ENCODE measurements at regions of chr7 and their contacts with region 1.

Region 1: DNA sequence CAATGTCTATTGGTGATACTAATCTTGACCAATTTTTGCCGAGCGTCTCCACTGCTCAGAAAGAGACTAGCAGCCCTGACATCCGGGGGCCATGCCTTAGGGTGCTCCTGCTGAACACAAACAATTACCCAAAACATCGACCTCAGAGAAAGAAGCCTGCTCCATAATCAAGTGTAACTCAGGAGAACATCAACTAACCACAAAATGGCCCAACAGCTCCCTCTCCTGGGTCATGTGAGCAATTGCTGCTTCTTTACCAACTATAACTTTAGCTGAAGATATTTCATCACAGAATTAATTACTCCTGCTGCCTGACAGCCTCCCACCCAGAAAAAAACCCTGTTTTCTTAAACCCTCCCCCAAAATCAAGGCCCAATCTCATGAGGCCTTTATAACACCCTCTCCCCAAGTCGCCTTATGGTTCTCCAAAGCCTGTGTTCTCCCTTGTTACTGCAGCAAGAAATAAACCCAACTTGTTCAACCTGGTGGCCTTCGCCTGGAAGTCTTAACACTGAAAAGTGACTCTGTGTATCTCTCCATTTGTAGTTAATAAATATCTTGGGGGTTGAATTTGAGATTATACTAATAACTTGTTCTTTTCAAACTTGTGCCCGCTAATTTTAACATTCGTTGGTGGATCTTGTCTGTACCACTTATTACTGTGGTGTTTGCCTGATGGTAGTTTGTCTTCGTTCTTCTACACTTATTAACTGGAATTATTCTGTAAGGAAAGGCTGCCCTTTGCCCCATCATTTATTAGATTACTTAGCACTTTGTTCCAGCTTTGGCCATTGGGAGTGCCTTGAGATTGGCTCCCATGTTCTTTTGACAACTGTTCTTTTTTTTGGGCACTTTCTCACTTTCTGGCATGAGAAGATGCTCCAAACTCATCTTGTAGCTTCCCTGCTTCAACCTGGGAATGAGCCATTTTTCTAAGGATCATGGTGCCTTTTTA is 21.2 kb upstream of the RAMP3 start:
- DNase-seq: peak; percentile 73
- H3K4me3 ChIP-seq: no peak overlapping the region
- H3K27ac ChIP-seq: no peak overlapping the region
- H3K4me1 ChIP-seq: peaks cover 0 to 11% (median 2%) of the 10 kb centered on the region in 6 donors
- H3K27me3 ChIP-seq: no peaks in the 10 kb centered on the region
- CTCF ChIP-seq: peak; percentile 65 to 92 (median 87)
- POLR2A ChIP-seq: no peak

Region 2: DNA sequence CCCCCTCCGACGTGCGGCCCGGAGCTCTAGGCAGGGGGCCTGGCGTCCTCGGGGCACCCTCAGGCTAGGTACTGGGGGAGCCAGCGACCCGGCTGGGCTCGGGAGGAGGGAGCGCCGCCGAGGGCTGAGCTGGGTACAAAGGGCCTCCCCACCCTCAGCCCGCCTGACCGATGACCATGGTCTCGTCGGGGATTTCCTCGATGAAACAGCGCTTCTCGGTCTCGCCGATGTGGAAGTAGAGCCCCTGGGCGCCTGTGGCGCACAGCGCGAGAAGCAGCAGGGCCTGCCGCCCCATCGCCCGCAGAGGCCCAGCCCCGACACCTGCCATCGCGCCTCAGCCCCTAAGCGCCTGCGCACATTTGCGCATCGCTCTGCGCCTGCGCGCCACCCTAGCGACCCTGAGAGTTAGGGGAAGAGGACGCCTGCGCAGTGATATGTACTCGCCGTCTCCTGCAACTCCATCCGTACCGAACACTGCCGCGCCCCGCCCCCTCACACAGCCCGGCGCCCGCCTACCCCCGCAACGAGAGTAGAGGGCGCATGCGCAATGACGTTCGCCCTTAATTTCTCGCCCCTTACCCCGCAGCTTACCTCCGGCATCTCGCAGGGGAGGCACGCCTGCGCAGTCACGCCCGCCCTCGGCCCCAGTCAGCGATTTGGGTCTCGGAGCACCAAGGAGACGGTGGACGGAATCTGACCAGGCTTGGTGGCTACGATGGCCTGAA is 554.3 kb before region 1 on chr7 and contains the start of gene TMED4:
- intact Hi-C with region 1: loop called (anchors 10 kb)
- DNase-seq: peak; percentile 100
- H3K4me3 ChIP-seq: peak within 1 kb of the TSS; percentile 75 to 98 (median 86)
- H3K27ac ChIP-seq: peak within 1 kb of the TSS; percentile 94 to 99 (median 98)
- H3K4me1 ChIP-seq: peaks cover 20 to 51% (median 32%) of the 10 kb centered on the region in 6 donors
- H3K27me3 ChIP-seq: no peaks in the 10 kb centered on the region
- CTCF ChIP-seq: peak in 4 of 11 experiments; percentile 18 to 36 (median 24)
- POLR2A ChIP-seq: peak in 2 of 3 donors; percentile 82 to 84
- total RNA-seq, gene TMED4: 55.4 to 105 (median 66.6) TPM

Region 3: DNA sequence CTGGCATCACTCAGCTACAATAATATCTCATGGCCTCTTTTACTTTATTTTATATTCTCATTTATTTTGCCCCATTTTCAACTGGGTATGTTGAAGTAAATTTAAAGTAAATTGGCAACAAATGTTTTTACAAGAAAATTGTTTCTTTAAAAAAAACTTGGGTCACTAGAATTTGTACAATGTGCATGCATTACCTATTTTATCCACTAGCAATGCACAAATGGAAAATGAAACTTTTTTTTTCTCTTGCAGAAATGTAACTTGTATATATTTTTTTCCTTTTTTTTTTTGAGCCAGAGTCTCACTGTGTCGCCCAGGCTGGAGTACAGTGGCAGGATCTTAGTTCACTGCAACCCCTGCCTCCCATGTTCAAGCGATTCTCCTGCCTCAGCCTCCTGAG is 278.2 kb before region 1 on chr7:
- intact Hi-C with region 1: loop called (anchors 5 kb)
- DNase-seq: no peak
- H3K4me3 ChIP-seq: no peak overlapping the region
- H3K27ac ChIP-seq: no peak overlapping the region
- H3K4me1 ChIP-seq: peaks cover 0 to 9% (median 3%) of the 10 kb centered on the region in 6 donors
- H3K27me3 ChIP-seq: peaks cover 0 to 8% (median 0%) of the 10 kb centered on the region in 7 donors
- CTCF ChIP-seq: peak in 1 of 11 experiments; percentile 8
- POLR2A ChIP-seq: no peak

Region 4: GRCh38 chr7:44921607-44922359 is 214.6 kb before region 1 on chr7:
- intact Hi-C with region 1: loop called (anchors 5 kb)
- DNase-seq: peak; percentile 98
- H3K4me3 ChIP-seq: no peak overlapping the region
- H3K27ac ChIP-seq: no peak overlapping the region
- H3K4me1 ChIP-seq: peaks cover 0 to 7% (median 6%) of the 10 kb centered on the region in 6 donors
- H3K27me3 ChIP-seq: no peaks in the 10 kb centered on the region
- CTCF ChIP-seq: peak; percentile 71 to 91 (median 83)
- POLR2A ChIP-seq: no peak

Region 5: DNA sequence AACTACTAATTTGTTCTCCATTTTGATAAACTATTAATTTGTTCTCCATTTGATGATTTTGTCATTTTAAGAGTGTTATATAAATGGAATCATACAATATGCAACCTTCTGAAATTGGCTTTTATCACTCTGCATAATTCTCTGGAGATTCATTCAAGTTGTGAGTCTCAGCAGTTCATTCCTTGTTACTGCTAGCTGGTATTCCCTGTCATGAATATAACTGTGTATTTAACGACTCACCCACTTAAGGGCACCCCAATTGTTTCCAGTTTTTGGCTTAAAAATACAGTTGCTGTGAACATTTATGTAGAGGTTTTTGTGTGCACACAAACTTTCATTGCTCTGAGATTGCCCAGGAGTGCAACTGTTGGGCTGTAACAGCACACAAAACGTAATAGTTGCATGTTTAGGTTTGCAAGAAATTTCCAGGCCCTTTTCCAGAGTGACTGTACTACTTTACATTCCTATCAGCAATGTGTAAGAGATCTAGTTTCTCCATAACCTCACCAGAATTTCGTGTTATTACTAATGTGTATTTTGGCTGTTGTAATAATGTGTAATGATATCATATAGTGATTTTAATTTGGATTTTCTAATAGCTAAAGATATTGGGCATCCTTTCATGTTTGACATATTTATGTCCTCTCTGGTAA is 284.6 kb after region 1 on chr7:
- intact Hi-C with region 1: no loop called
- DNase-seq: no peak
- H3K4me3 ChIP-seq: no peak overlapping the region
- H3K27ac ChIP-seq: no peak overlapping the region
- H3K4me1 ChIP-seq: no peaks in the 10 kb centered on the region
- H3K27me3 ChIP-seq: peaks cover 0 to 22% (median 0%) of the 10 kb centered on the region in 7 donors
- CTCF ChIP-seq: no peak
- POLR2A ChIP-seq: no peak

Region 6: DNA sequence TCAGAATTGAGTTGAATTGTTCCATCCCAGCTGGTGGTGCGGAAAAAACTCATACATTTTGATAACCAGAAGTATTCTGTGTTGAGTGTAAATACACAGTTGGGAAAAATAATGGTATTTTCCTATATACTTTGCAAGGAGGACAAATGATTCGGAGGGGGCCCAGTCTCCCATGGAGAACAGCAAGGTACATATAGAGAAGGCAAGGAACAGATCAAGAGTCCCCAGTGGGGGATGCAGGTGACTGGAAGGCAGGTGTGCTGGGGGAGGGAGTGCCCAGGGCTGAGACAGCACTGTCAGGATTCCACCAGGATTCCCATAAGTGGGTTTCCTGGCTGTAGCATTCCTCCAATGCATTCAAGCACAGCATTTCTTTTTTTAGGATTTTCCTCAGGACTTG is 427.0 kb after region 1 on chr7:
- intact Hi-C with region 1: no loop called
- DNase-seq: no peak
- H3K4me3 ChIP-seq: no peak overlapping the region
- H3K27ac ChIP-seq: no peak overlapping the region
- H3K4me1 ChIP-seq: no peaks in the 10 kb centered on the region
- H3K27me3 ChIP-seq: peaks cover 0 to 5% (median 0%) of the 10 kb centered on the region in 7 donors
- CTCF ChIP-seq: no peak
- POLR2A ChIP-seq: no peak